Heart left ventricle (tissue), 16 donors: ENCODE measurements at regions of chr18 and their contacts with region 1.

Region 1: DNA sequence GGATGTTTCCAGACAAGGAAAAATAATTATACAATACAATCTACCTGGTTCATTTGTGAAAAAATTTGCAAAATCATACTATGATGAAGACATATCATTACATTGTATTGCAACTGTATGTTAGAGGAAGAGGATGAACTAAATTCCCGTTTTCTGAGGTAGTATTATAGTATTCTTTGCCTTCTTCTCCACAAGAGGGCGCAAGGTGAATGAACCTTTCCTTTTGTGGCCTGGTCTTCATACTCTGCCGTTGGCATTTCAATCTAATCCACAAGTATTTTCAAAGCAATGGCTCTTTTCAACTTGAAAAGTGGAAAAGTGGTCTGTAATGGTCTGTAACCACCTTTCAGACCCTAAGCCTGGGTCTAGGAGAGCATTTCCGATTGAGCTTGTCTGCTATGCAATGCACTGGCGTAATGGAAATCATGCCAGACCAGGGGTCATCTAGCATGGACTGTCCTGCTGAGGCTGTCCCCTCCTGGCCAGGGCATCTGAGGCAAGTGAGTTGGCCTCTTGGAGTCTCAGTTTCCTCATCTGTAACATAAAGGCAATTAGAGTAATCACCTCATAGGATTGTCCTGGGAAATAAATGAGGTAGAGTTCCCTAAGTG is 30.8 kb upstream of the ZNF396 start:
- DNase-seq: peak in 2 of 5 donors; percentile 47 to 49
- ATAC-seq: peak in 3 of 4 donors; percentile 80 to 88 (median 86)
- H3K4me3 ChIP-seq: no peak overlapping the region
- H3K27ac ChIP-seq: no peak overlapping the region
- H3K4me1 ChIP-seq: peaks cover 0 to 14% (median 1%) of the 10 kb centered on the region in 12 donors
- H3K27me3 ChIP-seq: no peaks in the 10 kb centered on the region
- CTCF ChIP-seq: peak; percentile 60 to 89 (median 82)
- POLR2A ChIP-seq: no peak

Region 2: DNA sequence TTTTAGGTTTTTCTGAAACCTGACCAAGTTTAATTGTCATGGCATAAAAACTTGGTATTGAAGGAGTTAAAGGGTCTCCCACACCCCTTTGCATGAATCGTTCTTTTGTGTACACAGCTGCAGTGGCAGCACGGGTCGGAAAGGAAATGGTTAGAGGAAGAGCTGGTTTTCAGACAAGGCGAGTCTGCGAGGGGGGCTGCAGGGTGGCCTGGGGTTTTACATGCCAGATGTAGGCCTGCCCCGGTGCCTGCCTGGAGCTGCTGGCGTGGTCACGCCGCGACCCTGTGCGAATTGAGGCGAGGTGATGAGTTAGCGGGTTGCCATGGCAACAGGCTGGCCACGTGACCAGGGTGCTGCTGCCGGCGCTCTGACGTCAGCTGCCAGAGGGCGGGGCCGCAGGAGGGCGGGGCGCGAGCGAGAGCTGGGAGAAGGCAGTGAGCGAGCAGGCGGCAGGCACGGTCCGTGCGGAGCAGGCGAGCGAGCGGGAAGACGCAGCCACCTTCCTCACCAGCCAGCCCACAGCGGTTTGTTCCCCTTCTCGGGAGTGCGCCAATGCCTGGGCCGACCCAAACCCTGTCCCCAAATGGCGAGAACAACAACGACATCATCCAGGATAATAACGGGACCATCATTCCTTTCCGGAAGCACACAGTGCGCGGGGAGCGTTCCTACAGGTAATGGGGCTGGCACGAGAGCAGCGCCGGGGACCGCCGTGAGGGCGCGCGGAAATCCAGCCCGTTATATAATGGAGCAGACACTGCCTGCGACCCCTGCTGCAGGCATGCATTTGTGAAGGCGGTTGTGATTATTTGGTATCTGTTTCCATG is 366.8 kb before region 1 on chr18 and contains the start of gene MAPRE2:
- intact Hi-C with region 1: no loop called
- DNase-seq: peak; percentile 99 to 100 (median 99)
- ATAC-seq: peak; percentile 93 to 97 (median 96)
- H3K4me3 ChIP-seq: peak within 1 kb of the TSS; percentile 66 to 96 (median 92)
- H3K27ac ChIP-seq: peak within 1 kb of the TSS; percentile 75 to 95 (median 89)
- H3K4me1 ChIP-seq: peaks cover 0 to 77% (median 37%) of the 10 kb centered on the region in 12 donors
- H3K27me3 ChIP-seq: no peaks in the 10 kb centered on the region
- CTCF ChIP-seq: peak in 2 of 12 donors; percentile 9 to 10
- POLR2A ChIP-seq: peak; percentile 92 to 98
- total RNA-seq, gene MAPRE2: 80.2 to 190 (median 137) TPM

Region 3: DNA sequence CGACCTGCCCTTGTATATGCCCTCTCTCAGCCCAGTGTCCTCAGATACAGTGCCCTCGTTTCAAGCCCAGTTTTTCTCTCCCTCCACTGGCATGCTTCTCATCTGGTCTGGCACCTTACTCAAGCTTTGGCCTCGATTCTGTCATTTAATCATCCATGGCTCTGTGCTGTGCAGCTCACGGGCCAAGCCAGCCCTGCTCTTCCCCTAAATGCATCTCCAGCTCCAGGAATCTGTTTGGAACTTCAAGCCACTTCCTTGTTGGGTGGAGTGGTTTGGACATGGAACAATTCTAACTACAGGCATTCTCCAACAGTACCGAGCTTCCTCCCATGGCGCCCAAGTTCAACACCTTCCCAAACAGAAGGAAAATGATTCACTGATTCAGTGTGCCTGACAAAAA is 243.8 kb before region 1 on chr18:
- intact Hi-C with region 1: no loop called
- DNase-seq: peak in 3 of 5 donors; percentile 24 to 45 (median 38)
- ATAC-seq: peak; percentile 82 to 92 (median 88)
- H3K4me3 ChIP-seq: no peak overlapping the region
- H3K27ac ChIP-seq: peak overlapping the region in 9 of 12 donors; percentile 17 to 73 (median 53)
- H3K4me1 ChIP-seq: peaks cover 0 to 23% (median 14%) of the 10 kb centered on the region in 12 donors
- H3K27me3 ChIP-seq: no peaks in the 10 kb centered on the region
- CTCF ChIP-seq: no peak
- POLR2A ChIP-seq: no peak

Region 4: DNA sequence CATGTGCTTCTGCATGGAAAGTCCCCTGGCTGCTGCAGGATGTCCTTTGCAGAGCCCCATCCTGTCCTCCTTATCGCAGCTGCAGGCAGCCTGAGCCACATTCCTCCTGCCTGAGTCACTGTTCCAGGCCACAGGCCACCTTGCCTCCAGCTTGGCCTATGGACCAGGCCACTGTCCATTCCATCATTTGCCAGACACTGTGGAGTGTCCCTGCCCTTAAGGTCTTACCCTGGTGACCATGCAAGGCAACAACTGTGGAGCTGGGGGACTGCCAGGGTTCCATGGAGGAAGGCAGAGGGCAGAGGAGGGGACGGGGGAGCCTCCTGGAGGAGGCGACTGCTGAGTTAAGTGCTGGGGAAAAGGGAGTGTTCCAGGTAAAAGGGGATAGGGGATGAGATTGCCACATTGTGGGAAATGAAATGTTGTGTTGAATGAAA is 51.0 kb after region 1 on chr18:
- intact Hi-C with region 1: loop called in 2 of 10 experiments (anchors 5 to 10 kb)
- DNase-seq: peak; percentile 76 to 85 (median 80)
- ATAC-seq: peak; percentile 75 to 96 (median 94)
- H3K4me3 ChIP-seq: no peak overlapping the region
- H3K27ac ChIP-seq: peak overlapping the region in 11 of 12 donors; percentile 48 to 83 (median 59)
- H3K4me1 ChIP-seq: peaks cover 0 to 60% (median 43%) of the 10 kb centered on the region in 12 donors
- H3K27me3 ChIP-seq: no peaks in the 10 kb centered on the region
- CTCF ChIP-seq: no peak
- POLR2A ChIP-seq: no peak

Region 5: DNA sequence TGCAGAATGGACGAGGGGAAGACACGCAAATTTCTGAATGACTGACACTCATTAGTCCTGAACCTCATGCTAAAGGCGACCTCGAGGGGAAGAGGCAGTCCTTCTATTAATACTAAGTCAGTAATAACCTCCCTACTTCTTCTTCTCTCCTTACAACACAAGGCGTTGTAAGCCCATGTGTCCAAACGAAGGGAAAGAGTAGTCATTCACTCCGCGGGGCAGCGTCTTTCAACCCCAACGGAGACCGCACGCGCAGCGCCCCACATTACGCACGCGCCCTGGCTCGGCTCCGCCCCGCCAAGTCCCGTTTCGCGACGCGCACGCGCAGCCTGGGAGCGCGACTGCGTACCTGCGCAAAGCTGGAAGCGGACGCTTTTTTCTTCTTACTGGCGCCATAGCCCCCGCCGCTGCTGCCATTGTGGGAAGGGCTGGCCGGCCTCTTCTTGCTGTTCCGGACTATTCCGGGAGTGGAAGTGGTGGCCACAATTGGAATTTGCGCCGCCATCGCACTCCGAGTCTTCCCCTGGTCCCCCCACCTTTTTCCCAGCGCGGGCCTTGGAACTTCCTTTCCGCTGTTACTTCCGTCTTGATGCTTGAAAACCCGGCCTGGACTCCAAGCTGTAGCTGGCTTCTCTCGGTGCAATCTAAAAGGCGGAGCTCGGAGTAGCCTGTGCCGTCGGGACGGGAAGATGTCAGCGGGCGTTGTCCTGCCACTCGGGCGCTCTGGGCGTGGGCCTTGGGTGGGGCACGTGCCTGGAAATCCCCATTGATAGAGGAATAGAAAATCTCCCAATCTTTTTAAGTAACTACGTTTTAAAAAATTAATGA is 89.6 kb after region 1 on chr18 and contains the start of gene INO80C:
- intact Hi-C with region 1: loop called in 5 of 10 experiments (anchors 2 to 5 kb)
- DNase-seq: peak; percentile 92 to 96 (median 93)
- ATAC-seq: peak; percentile 98 to 99 (median 98)
- H3K4me3 ChIP-seq: peak within 1 kb of the TSS; percentile 38 to 81 (median 67)
- H3K27ac ChIP-seq: peak within 1 kb of the TSS; percentile 93 to 99 (median 94)
- H3K4me1 ChIP-seq: peaks cover 0 to 30% (median 14%) of the 10 kb centered on the region in 12 donors
- H3K27me3 ChIP-seq: no peaks in the 10 kb centered on the region
- CTCF ChIP-seq: no peak
- POLR2A ChIP-seq: peak; percentile 29 to 85
- total RNA-seq, gene INO80C: 5.6 to 29.0 (median 22.3) TPM

Region 6: GRCh38 chr18:35688757-35689156 is 280.8 kb after region 1 on chr18:
- intact Hi-C with region 1: loop called in 4 of 10 experiments (anchors 10 kb)
- DNase-seq: no peak
- ATAC-seq: no peak
- H3K4me3 ChIP-seq: no peak overlapping the region
- H3K27ac ChIP-seq: no peak overlapping the region
- H3K4me1 ChIP-seq: no peaks in the 10 kb centered on the region
- H3K27me3 ChIP-seq: no peaks in the 10 kb centered on the region
- CTCF ChIP-seq: no peak
- POLR2A ChIP-seq: no peak

Region 7: DNA sequence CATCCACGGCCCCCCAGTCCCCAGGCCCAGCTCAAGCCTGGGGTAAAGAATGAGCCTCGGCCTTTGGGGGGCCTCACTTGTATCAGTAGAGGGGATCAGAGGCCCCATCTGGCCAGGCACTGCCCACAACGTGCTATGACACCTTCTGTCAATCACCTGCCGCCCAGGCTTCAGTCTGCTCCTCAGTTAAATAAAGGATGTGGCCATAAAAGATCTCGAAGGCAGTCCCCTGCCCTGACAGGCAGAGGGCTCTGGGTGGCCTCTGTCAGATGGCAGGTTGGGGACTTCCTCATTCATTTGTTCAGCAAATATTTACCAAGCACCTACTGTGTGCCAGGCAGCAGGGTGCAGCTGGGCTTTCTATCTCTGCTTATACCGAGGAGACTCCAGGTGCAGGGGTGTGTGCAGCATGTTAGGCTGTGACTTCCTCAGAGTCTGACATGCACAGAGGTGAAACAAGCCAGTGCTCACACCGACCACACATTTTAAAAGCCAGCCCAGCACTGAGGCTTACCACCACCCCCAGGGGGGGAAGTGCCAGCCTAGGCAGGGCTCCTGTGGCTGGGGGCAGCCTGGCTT is 340.0 kb after region 1 on chr18:
- intact Hi-C with region 1: loop called in 2 of 10 experiments (anchors 10 kb)
- DNase-seq: no peak
- ATAC-seq: no peak
- H3K4me3 ChIP-seq: no peak overlapping the region
- H3K27ac ChIP-seq: no peak overlapping the region
- H3K4me1 ChIP-seq: no peaks in the 10 kb centered on the region
- H3K27me3 ChIP-seq: no peaks in the 10 kb centered on the region
- CTCF ChIP-seq: no peak
- POLR2A ChIP-seq: no peak

Region 8: DNA sequence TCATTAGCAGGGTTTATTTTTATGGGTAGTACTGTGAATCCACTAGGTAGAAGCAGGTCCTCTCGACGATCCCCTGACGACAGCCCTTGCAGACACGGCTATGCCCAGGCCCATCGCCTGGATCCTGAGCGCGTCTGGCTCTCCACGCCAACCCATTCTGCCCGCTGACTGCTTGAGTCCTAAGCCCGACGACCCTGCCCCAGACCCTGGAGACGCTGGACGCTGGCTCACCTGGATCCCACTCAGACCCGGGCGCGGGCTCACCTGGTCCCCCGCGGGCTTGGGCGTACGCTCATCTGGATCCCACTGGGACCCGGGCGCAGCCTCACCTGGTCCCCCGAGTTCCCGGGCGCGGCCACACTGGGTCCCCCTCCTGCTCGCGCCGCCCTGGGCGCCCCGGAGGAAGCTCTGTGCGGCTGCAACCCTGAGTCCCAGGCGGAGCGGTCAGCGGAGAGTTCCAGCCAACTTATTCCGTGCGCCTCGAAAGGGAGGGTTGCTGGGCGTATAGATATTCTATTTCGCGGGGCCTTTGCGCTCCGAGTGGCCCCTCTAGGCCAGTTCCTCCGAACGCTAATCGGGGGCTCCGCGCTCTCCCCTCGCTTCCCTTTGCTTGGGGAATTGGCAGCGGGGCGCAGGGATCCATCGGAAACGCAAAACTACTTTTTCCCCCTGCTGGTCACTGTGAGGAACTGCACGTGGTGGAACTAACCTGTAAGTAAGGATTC is 542.1 kb after region 1 on chr18:
- intact Hi-C with region 1: loop called in 2 of 10 experiments (anchors 5 kb)
- DNase-seq: peak; percentile 40 to 76 (median 52)
- ATAC-seq: peak; percentile 50 to 85 (median 82)
- H3K4me3 ChIP-seq: peak overlapping the region; percentile 18 to 69 (median 60)
- H3K27ac ChIP-seq: peak overlapping the region in 1 of 12 donors; percentile 2
- H3K4me1 ChIP-seq: peaks cover 0 to 13% (median 0%) of the 10 kb centered on the region in 12 donors
- H3K27me3 ChIP-seq: peaks cover 0 to 8% (median 0%) of the 10 kb centered on the region in 9 donors
- CTCF ChIP-seq: peak; percentile 84 to 96 (median 93)
- POLR2A ChIP-seq: no peak